A549 (cell line): ENCODE measurements at regions of chr22 and their contacts with region 1.

Region 1: DNA sequence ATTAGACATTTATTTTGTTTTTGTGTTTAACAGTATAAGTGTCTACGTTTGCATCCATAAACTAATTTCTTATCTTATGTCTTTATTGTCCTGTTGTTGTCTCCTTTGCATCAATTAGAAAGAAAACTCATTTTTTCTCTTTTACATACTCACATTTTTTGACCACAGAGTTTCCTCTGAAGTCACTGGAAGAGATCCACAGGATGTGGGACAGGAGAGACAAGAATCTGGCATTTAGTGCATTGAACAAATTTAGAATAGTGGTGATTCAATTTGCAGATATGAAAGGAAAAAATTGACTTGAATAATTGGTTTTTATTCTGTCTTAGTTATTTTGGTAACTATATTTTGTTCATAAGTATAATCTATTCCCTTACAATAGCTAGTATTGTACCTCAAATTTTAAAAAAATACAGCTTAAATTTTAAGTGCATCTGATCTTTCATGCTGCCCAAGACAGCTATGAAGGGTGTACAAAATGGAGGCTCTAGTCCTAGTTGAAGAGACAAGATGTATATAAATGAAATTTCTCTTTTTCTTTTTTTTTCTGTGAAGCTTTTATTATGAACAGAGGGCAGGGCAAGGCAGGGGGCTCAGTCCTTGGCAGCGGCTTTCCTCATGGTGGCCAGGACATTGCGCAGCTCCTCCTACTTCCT is 24.4 kb downstream of the HORMAD2 start:
- DNase-seq: no peak
- ATAC-seq: no peak
- H3K4me3 ChIP-seq: no peak overlapping the region
- H3K27ac ChIP-seq: peak overlapping the region in 1 of 2 experiments; percentile 72; a peak in 4 of 6 replicates
- H3K4me1 ChIP-seq: peaks cover 29% of the 10 kb centered on the region
- CTCF ChIP-seq: no peak
- EP300 ChIP-seq: no peak
- POLR2A ChIP-seq: no peak
- RAD21 ChIP-seq: no peak

Region 2: DNA sequence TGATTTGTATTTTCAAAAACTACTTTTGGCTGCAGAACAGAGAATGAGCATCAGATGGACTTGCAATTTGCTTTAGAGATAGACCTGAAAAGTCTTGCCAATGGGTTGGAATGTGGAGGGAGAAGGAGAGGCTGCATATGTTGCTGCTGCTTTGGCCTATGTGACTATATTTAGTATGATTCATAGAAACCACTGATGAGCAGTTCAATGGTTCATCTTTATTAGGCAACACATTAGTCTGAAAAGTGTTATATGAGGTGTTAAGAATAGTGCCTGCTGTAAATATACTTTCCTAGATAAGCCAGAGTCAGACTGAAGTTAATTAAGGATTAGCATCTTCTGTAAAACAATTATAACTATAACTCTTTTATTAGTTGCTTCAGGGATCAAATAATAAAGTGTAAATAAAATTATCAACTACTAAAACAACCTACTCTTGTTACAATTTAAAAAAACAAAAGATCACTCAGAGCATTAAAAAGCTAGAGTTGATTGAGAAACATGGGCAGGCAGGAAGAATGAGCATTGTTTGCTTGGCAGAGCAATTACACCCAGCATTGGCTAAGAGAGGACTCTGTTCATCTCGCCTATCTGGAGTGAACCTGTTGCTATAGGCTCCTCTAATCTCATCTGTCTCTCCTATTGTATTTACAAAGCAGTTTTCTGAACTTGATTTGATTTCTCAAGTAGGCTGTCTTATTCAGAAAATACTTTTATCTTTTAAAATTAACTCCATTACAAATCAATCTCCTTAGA is 11.9 kb after region 1 on chr22:
- CTCF ChIA-PET with region 1: interaction called, 10 read pairs
- POLR2A ChIA-PET with region 1: no interaction called
- DNase-seq: no peak
- ATAC-seq: peak; percentile 50 to 71; a peak in 4 of 6 replicates
- H3K4me3 ChIP-seq: no peak overlapping the region
- H3K27ac ChIP-seq: peak overlapping the region; percentile 49 to 84; a peak in 5 of 6 replicates
- H3K4me1 ChIP-seq: peaks cover 37% of the 10 kb centered on the region
- CTCF ChIP-seq: no peak
- EP300 ChIP-seq: no peak
- POLR2A ChIP-seq: no peak
- RAD21 ChIP-seq: no peak

Region 3: DNA sequence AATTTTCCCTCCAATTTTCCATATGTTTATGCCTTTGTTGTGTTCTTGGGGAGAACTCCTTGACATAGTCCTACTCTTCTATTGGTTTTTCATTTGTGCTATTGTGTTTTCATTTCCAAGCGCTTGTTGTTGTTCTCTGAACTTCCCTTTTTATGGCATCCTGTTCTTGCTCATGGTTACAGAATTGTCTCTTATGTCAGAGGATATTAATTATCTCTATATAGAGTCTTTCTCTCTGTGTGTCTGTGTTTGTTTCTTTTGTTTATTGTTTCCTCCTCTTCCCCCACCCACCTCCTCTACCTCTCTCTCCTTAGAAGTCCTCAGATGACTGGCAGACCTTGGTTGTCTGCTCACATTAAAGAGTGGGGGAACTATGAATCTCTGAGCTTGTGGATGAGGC is 45.6 kb after region 1 on chr22:
- CTCF ChIA-PET with region 1: no interaction called
- POLR2A ChIA-PET with region 1: no interaction called
- DNase-seq: no peak
- ATAC-seq: no peak
- H3K4me3 ChIP-seq: no peak overlapping the region
- H3K27ac ChIP-seq: 0 out of 6 replicates have a peak overlapping the region, but pooled peaks of 1 of the 2 experiments have one; percentile 1
- H3K4me1 ChIP-seq: no peaks in the 10 kb centered on the region
- CTCF ChIP-seq: no peak
- EP300 ChIP-seq: no peak
- POLR2A ChIP-seq: no peak
- RAD21 ChIP-seq: no peak

Region 4: DNA sequence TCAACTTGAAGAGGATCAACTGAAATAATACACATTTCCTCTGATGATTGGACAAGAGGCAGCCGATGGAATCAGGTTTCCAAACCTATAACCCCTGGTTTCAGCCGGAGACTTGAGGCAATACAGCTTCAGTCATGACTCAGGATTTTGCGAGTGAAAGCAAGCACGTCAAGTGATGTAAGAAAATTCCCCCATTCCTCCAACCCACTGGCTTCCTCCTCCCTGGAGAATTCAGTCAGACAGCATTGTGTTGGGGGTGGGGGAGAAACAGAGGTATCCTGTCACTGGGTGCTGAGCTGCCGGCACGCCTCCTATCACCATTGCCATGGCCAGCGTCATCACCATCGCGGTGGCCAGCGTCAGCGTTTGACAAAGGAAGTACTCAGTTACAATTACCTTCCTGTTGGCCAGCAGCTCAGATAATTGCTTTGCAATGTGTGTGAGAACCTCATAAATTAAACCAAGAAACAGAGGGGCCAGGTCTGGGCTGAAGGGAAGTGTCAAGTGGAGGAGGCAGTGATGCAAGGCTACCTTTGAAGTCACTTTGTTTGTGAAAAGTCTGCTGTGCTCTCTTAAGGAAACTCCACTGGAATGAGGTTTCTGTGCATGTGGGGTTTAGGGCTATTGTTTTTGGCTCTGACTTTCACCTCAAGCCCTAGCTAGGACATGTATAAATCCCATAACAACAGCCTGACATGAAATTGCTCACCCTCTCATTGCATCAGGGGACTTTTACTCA is 91.7 kb after region 1 on chr22:
- CTCF ChIA-PET with region 1: interaction called, 20 read pairs
- POLR2A ChIA-PET with region 1: no interaction called
- DNase-seq: peak; percentile 83 to 100
- ATAC-seq: peak; percentile 87 to 91
- H3K4me3 ChIP-seq: no peak overlapping the region
- H3K27ac ChIP-seq: peak overlapping the region; percentile 95 to 100
- H3K4me1 ChIP-seq: peaks cover 70% of the 10 kb centered on the region
- CTCF ChIP-seq: no peak
- EP300 ChIP-seq: peak; percentile 96 to 99; a peak in 4 of 5 replicates
- POLR2A ChIP-seq: no peak
- RAD21 ChIP-seq: peak in 1 of 2 experiments; percentile 36; a peak in 3 of 5 replicates

Region 5: DNA sequence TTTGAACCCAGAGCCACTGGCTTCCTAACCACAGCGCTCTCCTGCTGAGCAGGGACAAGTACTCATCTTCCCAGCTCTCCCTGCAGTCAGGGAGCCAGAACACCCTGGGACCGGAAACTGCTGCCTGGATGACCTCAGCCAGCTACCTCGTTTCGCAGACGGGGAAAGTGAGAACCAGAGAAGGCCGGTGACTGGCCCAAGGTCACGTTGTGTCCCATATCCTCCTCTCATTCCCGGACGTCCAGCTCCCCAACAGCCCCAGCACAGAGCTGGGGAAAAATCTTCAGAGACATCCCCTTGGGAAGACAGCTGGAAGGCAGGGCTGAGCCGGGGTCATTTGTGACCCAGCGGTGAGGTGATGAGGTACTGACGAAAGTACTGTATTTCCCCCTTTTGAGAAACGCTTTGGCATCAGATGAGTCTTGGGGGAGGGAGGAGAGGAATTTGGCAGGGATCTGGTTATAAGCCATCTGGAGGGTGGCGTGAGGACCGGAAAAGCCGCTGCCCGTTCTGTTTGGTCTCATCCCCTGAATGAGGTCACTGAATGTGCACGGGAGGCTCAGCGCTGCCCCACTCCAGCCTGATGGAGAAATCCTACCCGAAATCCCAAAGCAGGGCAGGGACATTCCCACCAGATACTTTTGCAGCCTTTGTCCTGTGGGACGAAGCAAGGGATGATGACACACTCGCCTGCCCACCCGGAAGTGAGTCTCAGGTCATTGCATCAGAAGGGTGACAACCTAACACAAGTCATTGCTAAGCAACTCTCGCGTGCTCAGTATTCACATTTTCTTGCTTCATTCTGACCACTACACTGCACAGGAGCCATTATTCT is 100.9 kb after region 1 on chr22:
- CTCF ChIA-PET with region 1: interaction called, 18 read pairs
- POLR2A ChIA-PET with region 1: no interaction called
- DNase-seq: peak; percentile 91 to 99
- ATAC-seq: peak; percentile 74 to 81
- H3K4me3 ChIP-seq: no peak overlapping the region
- H3K27ac ChIP-seq: peak overlapping the region; percentile 95 to 100
- H3K4me1 ChIP-seq: peaks cover 63% of the 10 kb centered on the region
- CTCF ChIP-seq: no peak
- EP300 ChIP-seq: peak; percentile 98 to 99; a peak in 3 of 5 replicates
- POLR2A ChIP-seq: no peak
- RAD21 ChIP-seq: peak; percentile 4 to 49; a peak in 2 of 5 replicates

Region 6: GRCh38 chr22:30212363-30212995 is 107.8 kb after region 1 on chr22:
- CTCF ChIA-PET with region 1: interaction called, 18 read pairs
- POLR2A ChIA-PET with region 1: no interaction called
- DNase-seq: peak; percentile 81 to 98
- ATAC-seq: peak; percentile 80 to 87
- H3K4me3 ChIP-seq: no peak overlapping the region
- H3K27ac ChIP-seq: peak overlapping the region; percentile 95 to 100
- H3K4me1 ChIP-seq: peaks cover 81% of the 10 kb centered on the region
- CTCF ChIP-seq: 0 out of 3 replicates have a peak, but pooled peaks have one; percentile 12
- EP300 ChIP-seq: peak; percentile 99
- POLR2A ChIP-seq: no peak
- RAD21 ChIP-seq: peak; percentile 67 to 68

Region 7: DNA sequence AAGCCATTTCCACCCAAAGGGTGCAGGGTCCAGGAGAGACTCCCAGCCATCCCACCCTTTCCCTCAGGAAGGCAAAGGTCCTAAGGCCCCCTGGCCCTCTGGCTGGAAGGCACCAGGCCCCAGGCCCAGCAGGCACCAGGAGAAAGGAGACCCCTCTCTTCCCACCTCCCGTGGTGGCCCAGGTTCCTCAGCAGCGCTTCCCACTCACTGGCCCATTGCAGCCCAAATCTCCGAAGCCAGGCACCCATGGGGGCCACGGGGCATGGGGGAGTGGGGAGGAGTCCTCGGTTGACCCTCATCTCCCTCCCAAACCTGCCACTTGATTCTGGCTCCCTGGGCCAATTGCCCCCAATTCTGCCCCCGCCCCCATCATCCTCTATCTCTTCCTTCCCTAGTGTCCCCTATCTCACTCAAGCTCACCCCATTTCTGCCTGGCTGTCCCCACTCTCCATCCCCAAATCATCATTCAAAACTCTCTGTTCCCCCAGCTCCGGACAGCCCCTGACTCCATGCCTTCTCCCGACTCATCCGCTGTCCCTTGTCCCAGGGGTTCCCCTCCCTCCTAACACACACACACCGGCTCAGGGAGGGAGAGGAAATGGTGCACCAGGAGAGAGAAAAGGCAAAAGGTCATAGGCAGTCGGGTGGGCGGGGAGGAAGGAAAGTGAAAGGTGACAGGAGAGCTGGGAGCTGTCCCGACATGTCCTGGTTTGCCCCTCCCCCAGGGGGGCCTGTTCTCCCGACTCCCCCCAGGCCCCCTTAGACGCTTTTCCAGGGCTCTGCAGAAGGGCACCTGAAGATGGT is 140.8 kb after region 1 on chr22:
- CTCF ChIA-PET with region 1: interaction called, 15 read pairs
- POLR2A ChIA-PET with region 1: no interaction called
- DNase-seq: no peak
- ATAC-seq: no peak
- H3K4me3 ChIP-seq: no peak overlapping the region
- H3K27ac ChIP-seq: peak overlapping the region; percentile 99 to 100
- H3K4me1 ChIP-seq: peaks cover 100% of the 10 kb centered on the region
- CTCF ChIP-seq: no peak
- EP300 ChIP-seq: no peak
- POLR2A ChIP-seq: no peak
- RAD21 ChIP-seq: no peak